Activated CD4-positive, alpha-beta memory T cell treated with anti-CD3 and anti-CD28 coated beads, Interleukin-2, amount 10 ng/mL, durations not matched to agents 7 days and 5 days (primary cell): ENCODE measurements at regions of chr9 and their contacts with region 1.

Region 1: GRCh38 chr9:4923580-4924544 is 61.2 kb upstream of the JAK2 start:
- DNase-seq: no peak
- H3K4me3 Mint-ChIP-seq: no peak overlapping the region
- H3K27ac Mint-ChIP-seq: peak overlapping the region; percentile 11
- H3K4me1 Mint-ChIP-seq: peaks cover 26% of the 10 kb centered on the region
- H3K27me3 Mint-ChIP-seq: no peaks in the 10 kb centered on the region

Region 2: GRCh38 chr9:4849364-4849763 is 74.5 kb before region 1 on chr9:
- CTCF ChIA-PET with region 1: interaction called, 14 read pairs
- POLR2A ChIA-PET with region 1: no interaction called
- DNase-seq: no peak
- H3K4me3 Mint-ChIP-seq: no peak overlapping the region
- H3K27ac Mint-ChIP-seq: no peak overlapping the region
- H3K4me1 Mint-ChIP-seq: peaks cover 18% of the 10 kb centered on the region
- H3K27me3 Mint-ChIP-seq: no peaks in the 10 kb centered on the region

Region 3: DNA sequence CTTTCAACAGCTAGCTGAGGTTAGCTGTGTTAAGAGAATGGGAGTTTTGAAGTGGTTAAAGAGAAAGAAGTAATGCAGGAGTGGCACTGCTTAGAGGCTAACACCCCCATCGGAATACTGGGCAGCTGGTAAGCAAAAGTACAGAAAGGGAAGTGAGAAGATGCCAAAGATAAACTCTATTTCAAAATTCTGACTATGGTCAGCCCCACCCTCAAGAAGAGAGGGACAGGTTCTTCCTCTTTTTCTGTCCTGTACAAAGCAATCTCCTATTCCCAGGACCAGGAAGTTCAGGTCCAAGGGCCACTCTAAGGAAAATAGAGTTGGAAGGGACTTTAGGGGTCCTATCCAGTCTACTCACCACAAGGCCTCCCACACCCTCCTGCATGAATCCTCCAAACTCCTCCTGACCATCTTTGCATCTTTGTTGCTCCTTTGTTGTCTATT is 15.3 kb after region 1 on chr9:
- CTCF ChIA-PET with region 1: interaction called, 17 read pairs
- POLR2A ChIA-PET with region 1: no interaction called
- DNase-seq: no peak
- H3K4me3 Mint-ChIP-seq: no peak overlapping the region
- H3K27ac Mint-ChIP-seq: peak overlapping the region; percentile 80
- H3K4me1 Mint-ChIP-seq: peaks cover 71% of the 10 kb centered on the region
- H3K27me3 Mint-ChIP-seq: no peaks in the 10 kb centered on the region